ENCODE measurements at regions of chr5 and their contacts with region 1.

Region 1: DNA sequence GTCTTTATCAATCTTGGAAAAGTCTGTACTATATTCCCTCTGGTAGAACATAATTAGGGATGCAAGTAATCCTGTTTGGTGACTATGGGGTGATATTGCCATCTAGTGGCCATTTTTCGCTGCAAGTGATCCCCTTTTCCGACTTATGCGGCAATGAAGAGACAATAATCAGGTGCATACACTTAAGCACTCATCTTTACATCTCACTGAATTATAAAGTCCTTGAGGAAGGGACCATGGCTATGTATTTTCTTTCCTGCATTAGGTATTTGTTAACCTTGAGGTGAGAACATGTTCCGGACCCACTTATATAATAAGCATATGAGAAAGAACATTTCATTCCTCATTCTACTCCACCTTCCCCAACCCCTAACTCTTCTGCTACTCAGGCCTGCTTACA is 19.6 kb upstream of the LIX1 start:
- DNase-seq: no peak
- ATAC-seq: peak; percentile 63 to 84 (median 70)
- H3K4me3 ChIP-seq: no peak overlapping the region
- H3K27ac ChIP-seq: no peak overlapping the region
- H3K4me1 ChIP-seq: no peaks in the 10 kb centered on the region
- H3K27me3 ChIP-seq: no peaks in the 10 kb centered on the region
- CTCF ChIP-seq: peak; percentile 88

Region 2: GRCh38 chr5:96113170-96113939 is 1048.7 kb before region 1 on chr5:
- intact Hi-C with region 1: no loop called
- DNase-seq: peak in 1 of 2 donors; percentile 52
- ATAC-seq: peak in 3 of 4 donors; percentile 57 to 83 (median 70)
- H3K4me3 ChIP-seq: no peak overlapping the region
- H3K27ac ChIP-seq: no peak overlapping the region
- H3K4me1 ChIP-seq: peaks cover 10% of the 10 kb centered on the region
- H3K27me3 ChIP-seq: no peaks in the 10 kb centered on the region
- CTCF ChIP-seq: no peak

Region 3: DNA sequence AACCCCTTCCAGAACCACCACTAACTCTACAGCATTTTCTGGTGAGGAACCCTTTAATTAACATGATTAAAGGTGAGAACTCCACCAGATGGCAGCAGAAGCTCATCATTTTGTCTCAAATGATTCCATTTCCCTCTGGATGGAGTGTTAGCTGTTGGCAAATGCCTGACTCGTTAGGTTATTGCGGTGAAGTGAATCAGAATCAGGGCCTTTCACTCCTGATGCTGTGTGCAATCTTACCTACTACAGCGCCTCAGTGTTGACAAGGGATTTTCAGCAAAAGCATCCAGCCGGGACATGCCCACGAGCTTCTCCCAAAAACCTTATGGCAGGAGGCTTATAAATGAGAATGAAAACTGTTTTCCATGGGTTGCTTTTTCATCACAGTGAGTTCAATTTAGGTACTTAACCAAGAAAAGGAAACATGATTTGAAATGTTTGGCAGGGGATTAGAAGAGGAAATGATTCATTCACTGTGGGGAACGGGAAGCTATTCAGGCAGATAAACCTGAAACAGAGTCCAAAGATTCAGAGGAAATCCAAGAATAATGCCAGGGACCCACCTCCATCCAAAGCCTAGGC is 547.8 kb before region 1 on chr5:
- intact Hi-C with region 1: loop called (anchors 5 to 10 kb)
- DNase-seq: no peak
- ATAC-seq: peak; percentile 93 to 98 (median 96)
- H3K4me3 ChIP-seq: no peak overlapping the region
- H3K27ac ChIP-seq: peak overlapping the region; percentile 48
- H3K4me1 ChIP-seq: peaks cover 8% of the 10 kb centered on the region
- H3K27me3 ChIP-seq: no peaks in the 10 kb centered on the region
- CTCF ChIP-seq: peak; percentile 63

Region 4: GRCh38 chr5:96752341-96753016 is 409.6 kb before region 1 on chr5:
- intact Hi-C with region 1: loop called in 1 of 2 experiments (anchors 5 kb)
- DNase-seq: no peak
- ATAC-seq: peak in 1 of 4 donors; percentile 30
- H3K4me3 ChIP-seq: no peak overlapping the region
- H3K27ac ChIP-seq: peak overlapping the region; percentile 41
- H3K4me1 ChIP-seq: peaks cover 4% of the 10 kb centered on the region
- H3K27me3 ChIP-seq: no peaks in the 10 kb centered on the region
- CTCF ChIP-seq: peak; percentile 69

Region 5: GRCh38 chr5:96868603-96869371 is 293.3 kb before region 1 on chr5:
- intact Hi-C with region 1: loop called (anchors 2 to 5 kb)
- DNase-seq: no peak
- ATAC-seq: peak; percentile 94 to 99 (median 96)
- H3K4me3 ChIP-seq: no peak overlapping the region
- H3K27ac ChIP-seq: no peak overlapping the region
- H3K4me1 ChIP-seq: peaks cover 4% of the 10 kb centered on the region
- H3K27me3 ChIP-seq: no peaks in the 10 kb centered on the region
- CTCF ChIP-seq: peak; percentile 97

Region 6: GRCh38 chr5:96997265-96997859 is 164.7 kb before region 1 on chr5:
- intact Hi-C with region 1: loop called in 1 of 2 experiments (anchors 5 kb)
- DNase-seq: no peak
- ATAC-seq: peak in 2 of 4 donors; percentile 67 to 69
- H3K4me3 ChIP-seq: no peak overlapping the region
- H3K27ac ChIP-seq: no peak overlapping the region
- H3K4me1 ChIP-seq: no peaks in the 10 kb centered on the region
- H3K27me3 ChIP-seq: no peaks in the 10 kb centered on the region
- CTCF ChIP-seq: peak; percentile 51

Region 7: DNA sequence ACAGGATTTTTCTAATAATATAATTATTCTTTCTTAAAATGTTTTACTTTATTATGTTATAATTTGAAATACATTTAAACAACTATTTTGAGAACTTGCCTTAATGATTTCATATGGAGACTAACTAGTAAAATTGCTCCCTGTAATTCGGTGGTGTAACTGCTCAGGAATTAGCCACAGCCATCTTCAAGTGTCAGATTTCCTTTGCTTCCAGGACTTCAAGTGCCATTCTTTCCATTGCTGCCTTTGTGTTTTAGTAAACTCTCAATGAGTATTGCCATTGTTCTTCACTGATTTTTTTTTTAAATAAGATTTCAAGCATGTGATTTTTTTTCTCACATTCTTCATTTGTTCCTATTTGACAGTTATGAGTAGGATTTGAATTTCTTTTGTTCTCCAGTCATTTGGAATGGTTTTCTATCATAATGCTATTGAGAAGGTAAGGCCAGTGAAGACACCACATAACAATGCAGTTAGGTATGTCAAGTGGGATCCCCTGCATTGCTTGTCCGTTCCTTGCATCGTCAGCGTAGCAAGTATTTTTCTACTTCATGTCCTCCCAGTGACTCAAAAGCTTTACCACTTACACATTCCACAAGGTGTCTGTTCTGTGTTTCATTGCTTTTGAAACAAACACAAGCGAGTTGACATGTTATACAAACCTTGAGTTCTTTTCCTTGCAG is 142.5 kb before region 1 on chr5:
- intact Hi-C with region 1: loop called in 1 of 2 experiments (anchors 5 kb)
- DNase-seq: no peak
- ATAC-seq: peak; percentile 53 to 83 (median 66)
- H3K4me3 ChIP-seq: no peak overlapping the region
- H3K27ac ChIP-seq: peak overlapping the region; percentile 20
- H3K4me1 ChIP-seq: peaks cover 5% of the 10 kb centered on the region
- H3K27me3 ChIP-seq: no peaks in the 10 kb centered on the region
- CTCF ChIP-seq: no peak

Region 8: DNA sequence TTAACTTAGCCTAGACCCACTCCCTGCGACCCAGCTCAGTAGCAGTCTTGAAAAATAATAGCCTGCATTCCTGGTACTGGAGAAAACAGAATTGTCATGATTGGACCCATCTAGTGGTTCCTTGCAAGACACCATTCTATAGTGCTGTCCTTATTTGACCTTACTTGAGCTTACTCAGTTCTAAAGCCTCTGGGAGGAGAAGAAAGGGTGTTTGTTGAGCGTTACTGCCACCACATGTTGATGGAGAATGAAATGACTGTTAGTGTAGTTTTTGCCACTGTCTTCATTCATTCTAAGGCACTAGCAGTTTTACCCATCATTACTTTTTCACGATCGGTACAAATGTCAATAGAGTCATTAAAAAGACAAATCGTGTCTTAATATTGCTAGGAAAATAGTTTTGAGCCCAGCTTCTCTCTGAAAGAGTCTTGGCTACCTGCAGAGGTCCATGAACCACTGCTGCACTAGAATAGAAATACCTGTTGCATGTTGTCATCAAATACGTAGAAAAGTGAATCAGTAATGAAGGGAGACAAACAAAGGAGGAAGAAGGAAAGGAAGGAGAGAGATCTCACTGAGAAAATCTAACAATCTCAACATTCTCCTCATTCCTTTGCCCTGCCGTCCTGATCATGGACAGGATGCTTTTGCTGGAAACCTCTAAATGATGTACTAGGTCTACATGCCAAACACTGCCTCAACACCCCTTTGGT is 115.6 kb before region 1 on chr5:
- intact Hi-C with region 1: loop called in 1 of 2 experiments (anchors 5 kb)
- DNase-seq: no peak
- ATAC-seq: no peak
- H3K4me3 ChIP-seq: no peak overlapping the region
- H3K27ac ChIP-seq: no peak overlapping the region
- H3K4me1 ChIP-seq: no peaks in the 10 kb centered on the region
- H3K27me3 ChIP-seq: no peaks in the 10 kb centered on the region
- CTCF ChIP-seq: no peak

Region 9: DNA sequence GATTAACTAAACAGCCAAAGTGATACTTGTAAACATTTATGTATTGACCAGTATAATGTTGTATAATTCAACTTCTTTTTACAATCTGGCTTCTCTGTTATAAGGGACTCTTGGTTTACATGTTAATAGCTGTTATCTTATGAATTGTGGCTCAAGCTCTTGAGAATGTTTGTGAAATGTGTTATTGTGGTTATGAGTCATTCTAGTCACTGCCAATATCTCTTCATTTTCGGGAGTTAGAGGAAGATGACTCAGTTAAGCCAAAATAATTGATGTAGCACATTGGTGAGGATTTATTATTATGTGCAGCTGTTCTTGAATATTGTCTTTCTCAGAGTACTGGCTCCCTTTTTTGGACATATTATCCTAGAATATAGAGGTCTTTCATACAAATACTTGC is 676.2 kb after region 1 on chr5:
- intact Hi-C with region 1: no loop called
- DNase-seq: no peak
- ATAC-seq: peak; percentile 51 to 64 (median 58)
- H3K4me3 ChIP-seq: no peak overlapping the region
- H3K27ac ChIP-seq: no peak overlapping the region
- H3K4me1 ChIP-seq: no peaks in the 10 kb centered on the region
- H3K27me3 ChIP-seq: no peaks in the 10 kb centered on the region
- CTCF ChIP-seq: no peak